ENCODE measurements at regions of chr15 and their contacts with region 1.

Region 1: DNA sequence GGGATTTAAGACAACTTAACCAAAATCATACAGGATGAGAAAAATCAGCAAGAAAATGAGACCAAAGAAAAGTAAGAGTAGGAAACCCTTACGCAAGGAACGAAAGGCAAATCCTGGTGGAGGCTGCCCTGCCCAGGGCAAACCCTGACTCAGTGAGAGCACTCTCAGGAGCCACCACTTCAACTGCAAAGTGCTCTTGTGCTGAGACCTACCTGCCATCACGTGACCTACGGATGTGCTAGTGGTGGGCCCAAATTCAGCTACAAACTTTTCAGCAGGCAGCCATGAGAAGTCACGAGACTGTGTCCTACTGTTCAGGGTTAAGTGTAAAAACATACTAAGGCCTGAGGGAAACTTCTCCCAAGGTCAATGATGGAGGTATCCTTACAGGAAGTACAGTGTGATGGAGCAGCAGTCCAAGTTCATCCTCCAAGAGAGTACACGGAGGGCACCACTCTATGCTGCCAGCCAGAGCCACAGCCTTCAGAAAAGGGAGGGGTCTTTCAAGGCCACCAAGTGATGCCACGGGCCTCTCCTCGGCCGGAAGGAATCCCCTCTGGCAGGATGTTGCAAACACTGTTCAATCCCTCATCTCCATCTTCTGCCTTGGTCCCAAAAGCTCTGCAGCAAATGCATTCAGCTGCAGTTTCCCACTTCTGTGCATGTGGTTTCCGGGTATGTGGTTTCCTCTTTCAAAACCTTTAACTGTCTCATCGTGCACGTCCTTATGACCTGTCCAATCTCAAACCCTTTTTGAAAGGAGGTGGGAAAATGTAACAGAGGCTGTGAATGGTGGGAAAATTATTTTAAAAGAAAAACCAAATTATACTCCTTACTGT is 9.5 kb downstream of the CHSY1 start:
- DNase-seq: peak in 1 of 4 donors; percentile 67
- ATAC-seq: peak; percentile 71
- H3K4me3 ChIP-seq: peak overlapping the region in 1 of 2 donors; percentile 19
- H3K27ac ChIP-seq: peak overlapping the region; percentile 50 to 85
- H3K4me1 ChIP-seq: peaks cover 75 to 100% of the 10 kb centered on the region in 2 donors
- H3K27me3 ChIP-seq: no peaks in the 10 kb centered on the region
- CTCF ChIP-seq: no peak

Region 2: DNA sequence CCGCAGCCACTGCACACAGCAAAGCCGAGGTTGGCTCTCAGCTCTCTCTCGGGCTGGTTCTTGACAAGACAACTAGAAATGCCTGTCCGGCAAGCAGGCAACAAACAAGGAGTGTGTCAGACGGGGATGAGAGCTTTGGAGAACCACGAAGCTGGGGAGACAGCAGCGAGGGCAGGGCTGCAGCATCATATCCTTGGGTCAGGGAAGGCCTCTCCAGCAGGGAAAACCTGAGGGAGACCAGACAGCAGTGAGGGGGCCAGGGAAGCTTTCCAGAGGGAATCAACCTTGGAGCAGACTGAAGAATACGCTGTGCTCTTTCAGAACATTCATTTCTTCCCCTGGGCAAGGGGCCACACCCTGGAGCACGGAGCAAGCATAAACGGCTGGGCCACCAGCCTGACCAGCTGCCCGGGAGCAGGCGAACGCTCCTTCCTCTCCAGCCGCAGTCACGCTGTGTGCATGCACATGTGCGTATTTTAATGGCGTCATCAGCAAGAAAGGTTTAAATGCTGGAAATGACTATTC is 49.2 kb before region 1 on chr15:
- intact Hi-C with region 1: loop called in 1 of 2 experiments (anchors 10 kb)
- DNase-seq: no peak
- ATAC-seq: peak; percentile 30
- H3K4me3 ChIP-seq: no peak overlapping the region
- H3K27ac ChIP-seq: peak overlapping the region; percentile 51 to 74
- H3K4me1 ChIP-seq: peaks cover 30 to 97% of the 10 kb centered on the region in 2 donors
- H3K27me3 ChIP-seq: no peaks in the 10 kb centered on the region
- CTCF ChIP-seq: no peak

Region 3: DNA sequence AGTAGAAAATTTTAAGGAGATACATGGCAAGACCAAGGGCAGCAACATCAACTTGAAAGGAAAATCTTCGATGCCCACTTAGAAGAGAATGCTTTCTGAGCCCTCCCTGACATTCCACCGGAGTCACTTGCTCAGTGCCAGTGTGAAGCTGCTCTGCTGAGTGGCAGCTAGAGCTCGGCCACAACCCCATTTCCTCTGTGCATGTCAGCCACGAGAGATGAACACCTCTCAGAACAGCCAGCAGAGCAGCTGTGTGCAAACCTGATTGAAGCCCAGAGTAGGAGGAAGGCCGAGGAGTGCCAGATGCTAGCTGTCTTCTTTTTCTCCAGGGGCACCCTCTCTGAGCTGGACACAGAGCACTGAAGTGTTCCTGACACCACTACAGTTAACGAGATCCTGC is 469.7 kb after region 1 on chr15:
- intact Hi-C with region 1: no loop called
- DNase-seq: no peak
- ATAC-seq: no peak
- H3K4me3 ChIP-seq: no peak overlapping the region
- H3K27ac ChIP-seq: no peak overlapping the region
- H3K4me1 ChIP-seq: no peaks in the 10 kb centered on the region
- H3K27me3 ChIP-seq: no peaks in the 10 kb centered on the region
- CTCF ChIP-seq: no peak